A549 (cell line): ENCODE measurements at regions of chr17 and their contacts with region 1.

Region 1: DNA sequence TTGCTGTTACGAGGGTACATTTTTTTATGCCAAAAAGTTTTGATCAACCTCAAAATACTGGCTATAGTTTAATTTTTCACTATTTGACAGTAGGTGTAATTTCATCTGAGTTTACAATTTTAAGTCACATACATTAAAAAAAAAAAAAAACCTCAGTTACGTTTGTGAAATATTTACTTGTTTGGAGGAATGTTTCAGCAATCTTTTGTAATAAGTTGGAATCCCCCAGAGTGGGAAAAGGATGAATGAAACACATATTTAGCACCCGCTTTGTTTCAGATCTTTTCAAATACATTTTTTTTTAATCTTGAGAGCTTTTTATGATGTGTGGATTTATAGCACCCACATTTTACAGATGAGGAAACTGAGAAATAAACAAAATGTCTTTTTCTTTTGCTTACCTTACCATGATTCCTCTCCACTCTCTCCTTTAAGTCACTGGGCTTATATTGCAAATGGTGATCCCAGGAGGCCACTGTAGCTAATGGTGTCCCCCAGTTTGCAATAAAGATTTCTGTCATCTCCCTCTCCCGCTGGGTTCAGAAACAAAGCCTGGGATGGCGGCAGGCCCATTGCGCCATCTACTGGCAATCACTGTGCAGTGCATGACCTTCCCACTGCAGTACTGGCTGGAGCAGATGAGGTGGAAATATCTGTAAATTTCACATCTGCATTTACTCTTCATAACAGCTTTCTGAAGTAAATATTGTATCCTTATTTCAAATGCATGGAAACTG is 27.7 kb downstream of the TBC1D3B start:
- DNase-seq: peak; percentile 57 to 92
- ATAC-seq: peak; percentile 91 to 97
- H3K4me3 ChIP-seq: no peak overlapping the region
- H3K27ac ChIP-seq: no peak overlapping the region
- H3K4me1 ChIP-seq: no peaks in the 10 kb centered on the region
- CTCF ChIP-seq: peak; percentile 98
- EP300 ChIP-seq: no peak
- POLR2A ChIP-seq: no peak
- RAD21 ChIP-seq: peak; percentile 90 to 97

Region 2: DNA sequence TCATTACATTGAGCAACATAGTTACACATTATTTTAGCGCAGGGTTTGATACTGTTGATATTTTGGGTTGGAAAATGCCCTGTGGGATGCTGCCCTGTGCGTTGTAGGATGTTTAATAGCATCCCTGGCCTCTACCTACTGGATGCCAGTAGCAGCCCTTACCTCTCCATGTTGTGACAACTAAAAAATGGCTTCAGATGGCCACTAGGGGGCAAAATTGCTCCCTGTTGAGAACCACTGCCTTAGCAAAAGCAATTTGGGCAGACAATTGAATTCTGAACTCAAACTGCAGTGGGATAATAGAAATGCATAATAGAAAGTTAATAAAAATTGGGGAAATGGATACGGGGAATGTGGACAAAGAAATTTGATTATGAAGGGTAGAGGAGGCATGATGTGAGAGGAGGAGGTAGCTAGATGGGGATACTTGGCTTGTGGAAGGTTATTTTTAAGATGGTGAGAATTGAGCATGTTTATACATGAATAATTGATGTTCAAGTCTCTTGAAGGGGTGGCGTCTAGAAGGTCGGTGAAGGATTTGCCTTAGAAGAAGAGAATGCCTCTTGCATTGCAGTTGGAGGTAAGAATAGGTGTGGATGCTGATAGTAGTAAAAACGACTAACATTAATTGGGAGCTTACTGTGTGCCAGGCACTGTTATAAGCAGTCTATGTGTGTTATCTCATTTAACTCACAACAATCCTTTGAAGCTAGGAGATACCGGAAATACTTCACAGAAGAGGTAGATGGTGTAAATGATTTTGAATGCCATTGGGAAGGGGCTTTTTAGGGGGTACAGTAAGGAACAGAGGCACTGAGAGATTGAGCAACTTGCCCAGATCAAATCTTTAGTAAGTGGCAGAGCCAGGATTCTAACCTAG is 299.0 kb before region 1 on chr17:
- CTCF ChIA-PET with region 1: interaction called, 10 read pairs
- POLR2A ChIA-PET with region 1: no interaction called
- DNase-seq: peak; percentile 67 to 81
- ATAC-seq: peak; percentile 87 to 91
- H3K4me3 ChIP-seq: no peak overlapping the region
- H3K27ac ChIP-seq: no peak overlapping the region
- H3K4me1 ChIP-seq: no peaks in the 10 kb centered on the region
- CTCF ChIP-seq: peak; percentile 91
- EP300 ChIP-seq: no peak
- POLR2A ChIP-seq: no peak
- RAD21 ChIP-seq: peak; percentile 58 to 68; a peak in 4 of 5 replicates

Region 3: DNA sequence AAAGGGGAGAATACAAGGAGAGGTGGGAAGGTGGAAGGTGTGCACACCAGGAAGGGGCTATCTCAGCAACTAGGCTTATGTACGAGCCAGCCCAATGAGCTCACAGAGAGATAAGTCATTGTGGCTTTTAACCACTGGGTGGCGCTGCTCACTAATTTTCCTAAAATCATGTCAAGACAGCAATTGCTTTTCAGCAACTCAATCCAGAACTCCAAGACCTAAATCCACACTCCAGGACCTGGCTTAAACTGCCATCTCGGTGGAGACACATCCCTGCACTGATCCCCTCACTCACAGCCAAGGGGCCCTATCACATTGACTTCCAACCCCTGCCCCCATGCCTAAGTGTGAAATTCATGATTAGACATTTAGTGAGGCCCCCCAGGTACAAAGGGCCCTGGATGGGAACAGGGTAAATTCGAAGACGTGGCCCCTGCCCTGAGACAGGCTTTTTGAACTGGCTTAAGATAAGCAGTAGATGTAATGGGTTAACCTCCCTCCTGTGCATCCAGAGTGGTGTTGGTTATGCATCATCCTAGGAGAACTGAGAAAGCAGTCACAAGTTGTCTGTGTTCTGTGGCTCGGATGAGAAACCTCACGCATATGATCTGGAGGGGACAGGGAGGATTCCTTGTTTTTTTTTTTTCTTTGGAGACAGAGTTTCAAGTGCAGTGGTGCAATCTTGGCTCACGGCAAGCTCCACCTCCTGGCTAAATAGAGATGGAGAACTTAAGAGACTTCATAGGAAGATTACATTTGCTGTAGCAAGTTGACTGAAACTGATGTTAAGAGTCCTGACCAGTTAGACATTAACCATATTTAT is 179.0 kb before region 1 on chr17:
- CTCF ChIA-PET with region 1: interaction called, 271 read pairs
- POLR2A ChIA-PET with region 1: interaction called, 6 read pairs
- DNase-seq: peak; percentile 69 to 84
- ATAC-seq: peak; percentile 83 to 93
- H3K4me3 ChIP-seq: no peak overlapping the region
- H3K27ac ChIP-seq: no peak overlapping the region
- H3K4me1 ChIP-seq: peaks cover 9% of the 10 kb centered on the region; the same call in 1 of the 3 replicates
- CTCF ChIP-seq: peak; percentile 93
- EP300 ChIP-seq: no peak
- POLR2A ChIP-seq: no peak
- RAD21 ChIP-seq: peak; percentile 96

Region 4: GRCh38 chr17:36004594-36005108 is 144.1 kb before region 1 on chr17:
- CTCF ChIA-PET with region 1: interaction called, 11 read pairs
- POLR2A ChIA-PET with region 1: no interaction called
- DNase-seq: no peak
- ATAC-seq: no peak
- H3K4me3 ChIP-seq: no peak overlapping the region
- H3K27ac ChIP-seq: no peak overlapping the region
- H3K4me1 ChIP-seq: no peaks in the 10 kb centered on the region
- CTCF ChIP-seq: no peak
- EP300 ChIP-seq: no peak
- POLR2A ChIP-seq: no peak
- RAD21 ChIP-seq: no peak

Region 5: DNA sequence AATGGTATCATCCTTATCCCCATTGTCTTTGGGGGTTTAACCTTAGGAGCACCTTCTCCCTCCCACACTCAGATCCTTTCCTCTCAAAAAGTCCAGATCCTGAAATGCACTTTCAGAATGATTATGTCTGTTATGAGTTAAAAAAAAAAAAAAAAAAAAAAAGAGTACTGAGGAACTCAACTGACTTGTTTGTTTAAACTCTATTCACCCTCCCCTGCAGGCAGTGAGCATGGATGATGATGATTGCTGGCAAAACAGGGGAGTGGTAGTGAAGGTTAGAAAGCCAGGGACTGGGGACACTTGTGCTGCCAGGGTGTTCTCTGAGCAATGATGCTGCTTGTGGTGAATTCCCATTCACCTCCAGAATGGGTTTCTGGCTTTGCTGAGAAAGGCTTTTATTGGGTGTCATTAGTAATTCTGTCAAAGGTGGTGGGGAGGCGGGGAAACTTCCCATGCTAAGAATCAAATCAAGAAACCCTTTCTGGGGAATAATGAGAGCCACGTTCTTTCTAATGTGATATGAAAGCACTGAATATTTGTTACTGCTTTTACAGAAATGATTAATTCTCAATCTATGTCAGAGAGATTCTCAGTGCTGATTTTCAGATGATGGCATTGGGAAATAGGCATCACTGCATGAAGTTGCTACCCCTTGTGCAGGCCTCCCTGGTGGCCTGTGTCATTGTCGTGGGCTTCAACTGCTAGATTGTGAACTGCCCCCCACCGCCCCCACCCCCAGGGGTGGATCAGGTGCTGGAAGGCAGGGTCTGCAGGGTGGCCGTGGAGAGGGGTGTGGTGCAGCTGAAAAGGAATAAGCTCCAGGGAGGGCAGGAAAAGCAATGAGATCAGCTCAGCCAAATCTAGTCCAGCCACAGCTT is 31.0 kb before region 1 on chr17:
- CTCF ChIA-PET with region 1: interaction called, 14 read pairs
- POLR2A ChIA-PET with region 1: no interaction called
- DNase-seq: no peak
- ATAC-seq: no peak
- H3K4me3 ChIP-seq: no peak overlapping the region
- H3K27ac ChIP-seq: no peak overlapping the region
- H3K4me1 ChIP-seq: no peaks in the 10 kb centered on the region
- CTCF ChIP-seq: no peak
- EP300 ChIP-seq: no peak
- POLR2A ChIP-seq: no peak
- RAD21 ChIP-seq: no peak

Region 6: GRCh38 chr17:36133602-36134236 is 15.0 kb before region 1 on chr17:
- CTCF ChIA-PET with region 1: interaction called, 83 read pairs
- POLR2A ChIA-PET with region 1: no interaction called
- DNase-seq: peak in 1 of 2 experiments; percentile 12
- ATAC-seq: no peak
- H3K4me3 ChIP-seq: no peak overlapping the region
- H3K27ac ChIP-seq: no peak overlapping the region
- H3K4me1 ChIP-seq: no peaks in the 10 kb centered on the region
- CTCF ChIP-seq: no peak
- EP300 ChIP-seq: no peak
- POLR2A ChIP-seq: no peak
- RAD21 ChIP-seq: no peak

Region 7: GRCh38 chr17:36468903-36469635 is 320.3 kb after region 1 on chr17:
- CTCF ChIA-PET with region 1: no interaction called
- POLR2A ChIA-PET with region 1: no interaction called
- DNase-seq: no peak
- ATAC-seq: peak in 1 of 2 experiments; percentile 23; a peak in 2 of 6 replicates
- H3K4me3 ChIP-seq: no peak overlapping the region
- H3K27ac ChIP-seq: no peak overlapping the region
- H3K4me1 ChIP-seq: no peaks in the 10 kb centered on the region
- CTCF ChIP-seq: no peak
- EP300 ChIP-seq: no peak
- POLR2A ChIP-seq: no peak
- RAD21 ChIP-seq: no peak